Activated naive CD8-positive, alpha-beta T cell treated with anti-CD3 and anti-CD28 coated beads, Interleukin-2, amount 10 ng/mL, durations not matched to agents 7 days and 5 days (primary cell): ENCODE measurements at regions of chr6 and their contacts with region 1.

Region 1: DNA sequence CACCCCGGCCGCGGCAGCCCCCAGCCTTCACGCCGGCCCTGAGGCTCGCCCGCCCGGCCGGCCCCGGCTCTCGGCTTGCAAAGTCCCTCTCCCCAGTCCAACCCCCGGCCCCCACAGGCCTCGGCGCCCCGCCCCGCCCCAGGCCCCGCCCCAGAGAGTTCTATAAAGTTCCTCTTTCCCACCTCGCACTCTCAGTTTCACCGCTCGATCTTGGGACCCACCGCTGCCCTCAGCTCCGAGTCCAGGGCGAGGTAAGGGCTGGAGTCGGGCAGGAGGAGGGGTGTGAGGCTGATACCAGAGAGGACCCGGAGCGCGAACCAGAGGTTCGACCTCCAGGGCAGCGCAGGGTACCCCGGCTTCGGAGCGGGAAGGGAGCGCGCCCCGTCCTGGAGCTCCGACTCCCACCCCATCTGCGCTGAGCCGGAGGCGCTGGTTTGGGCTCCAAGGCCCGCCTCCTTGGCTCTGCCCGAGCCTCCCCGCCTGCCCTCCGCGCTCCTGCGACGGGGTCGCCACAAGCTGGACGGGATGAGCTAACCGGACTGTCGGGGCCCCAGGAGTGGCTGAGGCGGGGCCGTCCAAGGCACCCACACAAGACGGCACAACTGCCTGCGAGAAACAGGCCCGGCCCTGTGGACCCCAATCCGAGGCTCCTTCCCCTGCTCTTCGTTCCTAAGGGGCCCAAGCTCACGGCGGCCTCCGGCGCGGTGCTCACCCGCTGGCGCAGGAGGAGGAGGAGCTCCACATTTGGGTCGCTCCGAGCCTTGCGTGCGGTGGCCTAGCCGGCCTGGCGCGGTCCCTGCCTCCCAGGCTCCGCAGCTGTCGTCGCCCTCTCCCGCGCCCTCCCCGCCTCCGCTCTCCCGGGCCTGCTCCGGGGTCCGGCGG is at the start of gene IRF4:
- DNase-seq: peak; percentile 81
- ATAC-seq: peak; percentile 51
- H3K4me3 Mint-ChIP-seq: peak within 1 kb of the TSS; percentile 98
- H3K27ac Mint-ChIP-seq: peak within 1 kb of the TSS; percentile 94
- H3K4me1 Mint-ChIP-seq: peaks cover 40% of the 10 kb centered on the region
- H3K27me3 Mint-ChIP-seq: peaks cover 2% of the 10 kb centered on the region
- total RNA-seq, gene IRF4: 94.2 to 95.1 TPM

Region 2: DNA sequence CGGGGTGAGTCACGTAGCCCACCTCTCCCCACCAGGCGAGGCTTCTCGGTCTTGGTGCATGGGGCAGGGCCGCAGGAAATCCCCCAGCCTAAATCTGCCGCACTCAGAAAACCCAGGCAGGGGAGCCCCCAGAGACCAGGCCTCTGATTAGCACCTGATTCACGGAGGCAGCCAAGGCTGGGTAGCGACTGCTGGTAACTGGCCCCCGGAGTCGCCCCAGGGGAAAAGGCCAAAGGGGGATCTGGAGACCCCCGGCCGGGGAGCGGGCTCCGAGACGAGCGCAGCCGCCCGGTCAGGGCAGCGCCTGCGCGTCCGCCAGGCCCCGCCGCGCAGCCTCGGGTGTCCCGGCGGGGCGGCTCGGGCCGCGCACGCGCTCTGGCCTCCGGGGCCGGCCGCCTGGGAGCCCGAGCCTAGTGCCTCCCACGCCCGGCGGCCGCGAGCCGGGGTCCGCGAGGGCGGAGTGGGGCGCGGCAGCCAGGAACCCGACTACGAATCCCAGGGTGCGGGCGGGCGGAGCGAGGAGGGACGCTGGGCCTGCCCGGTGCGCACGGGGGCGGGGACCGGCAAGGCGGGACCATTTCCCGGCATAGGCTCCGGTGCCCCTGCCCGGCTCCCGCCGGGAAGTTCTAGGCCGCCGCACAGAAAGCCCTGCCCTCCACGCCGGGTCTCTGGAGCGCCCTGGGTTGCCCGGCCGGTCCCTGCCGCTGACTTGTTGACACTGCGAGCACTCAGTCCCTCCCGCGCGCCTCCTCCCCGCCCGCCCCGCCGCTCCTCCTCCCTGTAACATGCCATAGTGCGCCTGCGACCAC is 99.9 kb before region 1 on chr6 and contains the start of gene DUSP22:
- POLR2A ChIA-PET with region 1: interaction called, 19 read pairs
- DNase-seq: peak; percentile 91
- ATAC-seq: peak; percentile 74
- H3K4me3 Mint-ChIP-seq: peak within 1 kb of the TSS; percentile 91
- H3K27ac Mint-ChIP-seq: peak within 1 kb of the TSS; percentile 91
- H3K4me1 Mint-ChIP-seq: peaks cover 47% of the 10 kb centered on the region
- H3K27me3 Mint-ChIP-seq: no peaks in the 10 kb centered on the region
- total RNA-seq, gene DUSP22: 49.1 to 50.4 TPM

Region 3: GRCh38 chr6:436308-437036 is 44.7 kb after region 1 on chr6:
- POLR2A ChIA-PET with region 1: interaction called, 27 read pairs
- DNase-seq: no peak
- ATAC-seq: no peak
- H3K4me3 Mint-ChIP-seq: no peak overlapping the region
- H3K27ac Mint-ChIP-seq: peak overlapping the region; percentile 12
- H3K4me1 Mint-ChIP-seq: peaks cover 34% of the 10 kb centered on the region
- H3K27me3 Mint-ChIP-seq: no peaks in the 10 kb centered on the region

Region 4: DNA sequence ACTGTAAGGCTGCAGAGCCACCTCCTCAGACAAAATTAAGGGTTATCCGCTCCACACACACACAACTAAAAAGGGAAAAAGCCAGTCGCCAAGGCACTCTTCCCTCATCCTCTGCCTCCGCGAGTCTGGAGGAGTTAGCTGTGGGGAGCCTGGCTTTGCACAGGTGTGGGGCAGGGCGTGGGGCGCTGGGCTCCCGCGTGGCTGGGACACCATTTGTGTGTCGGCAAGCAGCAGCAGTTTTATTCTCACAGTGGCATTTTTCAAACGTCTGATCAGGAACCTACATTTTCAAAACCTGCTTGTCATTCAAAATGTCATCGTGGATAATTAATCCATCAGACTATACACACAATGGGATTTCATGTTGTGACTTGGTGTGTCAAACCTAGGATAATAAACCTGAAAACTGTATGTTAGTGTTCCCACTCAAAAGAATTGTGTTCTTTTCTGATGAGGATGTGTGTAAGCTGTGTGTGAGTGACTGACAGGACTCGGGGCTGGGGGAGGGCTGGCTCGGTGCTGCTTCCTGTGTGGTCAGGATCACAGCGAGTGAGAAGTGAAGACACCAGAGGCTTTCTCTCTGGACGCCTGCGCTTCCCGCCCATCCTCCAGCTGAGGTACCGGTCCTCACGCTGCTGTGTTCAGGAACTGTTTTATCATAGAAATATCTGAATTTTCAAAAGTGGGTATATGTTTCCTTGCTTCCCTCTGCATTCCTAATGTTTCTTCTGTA is 82.8 kb after region 1 on chr6:
- POLR2A ChIA-PET with region 1: interaction called, 27 read pairs
- DNase-seq: peak; percentile 76
- ATAC-seq: peak; percentile 100
- H3K4me3 Mint-ChIP-seq: peak overlapping the region; percentile 72
- H3K27ac Mint-ChIP-seq: peak overlapping the region; percentile 95
- H3K4me1 Mint-ChIP-seq: peaks cover 60% of the 10 kb centered on the region
- H3K27me3 Mint-ChIP-seq: no peaks in the 10 kb centered on the region

Region 5: DNA sequence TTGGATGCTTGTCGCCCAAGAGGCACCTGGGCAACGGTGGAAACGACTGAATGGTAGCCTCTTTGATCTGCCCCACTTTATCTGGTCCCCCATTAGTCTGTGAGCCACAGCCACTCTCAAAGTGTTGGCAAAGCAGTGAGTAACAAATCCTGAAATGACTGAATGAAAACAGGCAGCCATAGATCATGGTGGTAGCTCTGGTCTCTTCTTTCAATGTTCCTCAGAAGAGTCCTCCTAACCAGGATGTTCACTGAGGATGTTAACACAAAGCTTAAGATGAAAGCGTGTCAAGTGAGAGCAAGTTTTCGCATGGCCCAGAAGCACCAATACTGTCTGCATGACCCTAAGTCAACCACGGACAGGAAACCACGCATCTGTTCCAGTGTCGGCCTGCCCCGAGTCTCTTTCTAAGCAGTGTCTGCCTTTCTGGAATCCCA is 107.0 kb after region 1 on chr6:
- POLR2A ChIA-PET with region 1: interaction called, 34 read pairs
- DNase-seq: peak; percentile 59
- ATAC-seq: peak; percentile 80
- H3K4me3 Mint-ChIP-seq: peak overlapping the region; percentile 78
- H3K27ac Mint-ChIP-seq: peak overlapping the region; percentile 87
- H3K4me1 Mint-ChIP-seq: peaks cover 65% of the 10 kb centered on the region
- H3K27me3 Mint-ChIP-seq: no peaks in the 10 kb centered on the region

Region 6: DNA sequence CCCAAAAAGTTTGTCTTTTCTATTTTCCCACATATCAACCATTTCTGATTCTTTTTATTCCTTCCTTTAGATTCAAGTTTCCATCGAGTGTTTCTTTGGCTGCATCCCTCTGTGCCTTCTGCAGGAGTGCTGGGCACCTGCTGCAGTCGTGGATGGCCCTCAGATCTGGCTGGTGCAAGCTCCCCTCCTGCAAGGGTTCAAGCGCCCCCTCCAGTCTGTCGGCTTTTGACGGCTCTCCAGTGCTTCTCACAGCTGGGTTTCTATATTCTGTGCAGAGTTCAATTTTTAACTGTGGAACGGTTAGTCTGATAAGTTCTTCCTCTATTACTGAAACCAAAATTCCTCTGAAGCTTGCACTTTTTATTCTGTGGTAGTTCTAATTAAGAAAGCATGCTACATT is 133.0 kb after region 1 on chr6:
- POLR2A ChIA-PET with region 1: interaction called, 10 read pairs
- DNase-seq: no peak
- ATAC-seq: peak; percentile 66
- H3K4me3 Mint-ChIP-seq: no peak overlapping the region
- H3K27ac Mint-ChIP-seq: no peak overlapping the region
- H3K4me1 Mint-ChIP-seq: peaks cover 4% of the 10 kb centered on the region
- H3K27me3 Mint-ChIP-seq: no peaks in the 10 kb centered on the region

Region 7: DNA sequence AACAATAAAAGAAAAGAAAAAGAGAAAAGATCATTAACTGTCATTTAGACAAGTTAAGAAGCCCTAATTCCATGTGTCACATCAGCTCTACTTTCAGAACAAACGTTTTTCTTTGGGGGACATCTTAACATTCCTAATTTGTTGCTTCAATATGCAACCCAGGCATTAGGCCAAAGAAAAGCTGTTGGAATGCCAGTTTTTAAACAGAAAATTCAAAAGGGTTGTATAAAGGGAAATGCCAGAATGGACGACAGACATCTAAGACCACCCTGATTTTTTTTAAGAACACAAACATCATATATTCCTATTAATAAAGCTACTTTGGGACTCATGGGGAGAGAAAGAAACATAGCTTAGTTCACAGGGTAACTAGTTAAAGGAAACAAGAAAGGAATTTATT is 1538.6 kb after region 1 on chr6:
- POLR2A ChIA-PET with region 1: no interaction called
- DNase-seq: no peak
- ATAC-seq: no peak
- H3K4me3 Mint-ChIP-seq: no peak overlapping the region
- H3K27ac Mint-ChIP-seq: no peak overlapping the region
- H3K4me1 Mint-ChIP-seq: no peaks in the 10 kb centered on the region
- H3K27me3 Mint-ChIP-seq: no peaks in the 10 kb centered on the region